ENCODE measurements at regions of chr20 and their contacts with region 1.

Region 1: DNA sequence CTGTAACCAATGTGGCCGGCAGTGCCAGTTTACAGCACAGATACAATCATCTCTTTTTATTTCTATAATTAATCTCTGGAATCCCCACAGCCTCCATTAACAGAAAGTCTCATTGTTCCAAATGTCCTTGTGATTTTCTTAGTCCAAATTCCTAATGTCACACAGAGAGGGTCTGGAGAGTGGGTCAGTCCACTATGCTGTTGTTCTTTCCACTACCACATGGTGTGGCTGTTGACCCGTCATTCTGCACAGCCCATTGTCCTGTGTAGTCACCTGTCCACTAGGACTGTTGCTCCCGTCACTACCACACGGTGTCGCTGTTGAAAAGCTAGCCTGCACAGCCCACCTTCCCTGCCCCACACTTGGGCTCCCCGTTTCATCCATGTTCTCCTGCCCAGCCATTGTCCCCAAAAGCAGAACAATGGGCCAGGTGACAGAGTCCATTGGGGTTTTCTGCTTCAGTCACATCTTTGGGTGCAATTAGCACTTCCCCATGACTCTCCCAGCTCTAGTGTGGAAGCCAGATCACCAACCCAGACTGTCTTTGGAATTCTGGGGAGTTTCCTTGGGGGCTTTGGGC is 8.6 kb upstream of the LBP start:
- DNase-seq: peak; percentile 72
- ATAC-seq: peak; percentile 88
- H3K4me3 ChIP-seq: no peak overlapping the region
- H3K27ac ChIP-seq: no peak overlapping the region
- H3K4me1 ChIP-seq: peaks cover 13% of the 10 kb centered on the region
- H3K27me3 ChIP-seq: peaks cover 0 to 13% of the 10 kb centered on the region in 2 experiments; a peak in 1 of 5 replicates
- CTCF ChIP-seq: peak; percentile 92
- EP300 ChIP-seq: no peak
- POLR2A ChIP-seq: no peak
- RAD21 ChIP-seq: peak; percentile 89

Region 2: GRCh38 chr20:38355151-38356012 is 17.7 kb after region 1 on chr20:
- CTCF ChIA-PET with region 1: interaction called, 9 read pairs
- POLR2A ChIA-PET with region 1: no interaction called
- in situ Hi-C with region 1: no loop called
- intact Hi-C with region 1: loop called (anchors 1 kb)
- DNase-seq: no peak
- ATAC-seq: peak; percentile 72
- H3K4me3 ChIP-seq: peak overlapping the region in 1 of 3 experiments; percentile 13; a peak in 1 of 6 replicates
- H3K27ac ChIP-seq: no peak overlapping the region
- H3K4me1 ChIP-seq: peaks cover 13% of the 10 kb centered on the region
- H3K27me3 ChIP-seq: no peaks in the 10 kb centered on the region
- CTCF ChIP-seq: no peak
- EP300 ChIP-seq: no peak
- POLR2A ChIP-seq: no peak
- RAD21 ChIP-seq: no peak

Region 3: DNA sequence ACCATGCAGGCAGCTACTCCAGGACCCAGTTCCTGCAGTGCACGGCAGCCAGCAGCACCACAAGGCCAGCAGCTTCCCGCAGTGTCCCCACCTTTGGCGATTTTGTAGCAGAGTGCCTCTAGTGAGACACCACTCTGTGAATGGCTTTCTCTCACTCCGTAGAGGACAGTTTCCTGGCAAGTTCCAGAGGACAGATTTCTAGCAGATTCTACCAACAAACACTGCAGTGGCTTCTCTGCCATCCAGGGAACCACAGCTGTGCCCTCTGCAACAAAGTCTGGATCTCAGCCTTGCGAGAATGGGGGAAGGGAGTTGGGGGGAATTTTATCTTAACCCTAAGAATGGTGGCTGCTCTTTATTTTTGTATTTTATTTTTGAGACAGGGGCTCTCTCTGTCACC is 68.8 kb after region 1 on chr20:
- CTCF ChIA-PET with region 1: interaction called, 38 read pairs
- POLR2A ChIA-PET with region 1: no interaction called
- in situ Hi-C with region 1: loop called (anchors 5 kb)
- intact Hi-C with region 1: loop called (anchors 1 kb)
- DNase-seq: no peak
- ATAC-seq: peak; percentile 10; the same call in 1 of the 3 replicates
- H3K4me3 ChIP-seq: no peak overlapping the region
- H3K27ac ChIP-seq: no peak overlapping the region
- H3K4me1 ChIP-seq: peaks cover 14% of the 10 kb centered on the region
- H3K27me3 ChIP-seq: no peaks in the 10 kb centered on the region
- CTCF ChIP-seq: no peak
- EP300 ChIP-seq: no peak
- POLR2A ChIP-seq: no peak
- RAD21 ChIP-seq: no peak

Region 4: DNA sequence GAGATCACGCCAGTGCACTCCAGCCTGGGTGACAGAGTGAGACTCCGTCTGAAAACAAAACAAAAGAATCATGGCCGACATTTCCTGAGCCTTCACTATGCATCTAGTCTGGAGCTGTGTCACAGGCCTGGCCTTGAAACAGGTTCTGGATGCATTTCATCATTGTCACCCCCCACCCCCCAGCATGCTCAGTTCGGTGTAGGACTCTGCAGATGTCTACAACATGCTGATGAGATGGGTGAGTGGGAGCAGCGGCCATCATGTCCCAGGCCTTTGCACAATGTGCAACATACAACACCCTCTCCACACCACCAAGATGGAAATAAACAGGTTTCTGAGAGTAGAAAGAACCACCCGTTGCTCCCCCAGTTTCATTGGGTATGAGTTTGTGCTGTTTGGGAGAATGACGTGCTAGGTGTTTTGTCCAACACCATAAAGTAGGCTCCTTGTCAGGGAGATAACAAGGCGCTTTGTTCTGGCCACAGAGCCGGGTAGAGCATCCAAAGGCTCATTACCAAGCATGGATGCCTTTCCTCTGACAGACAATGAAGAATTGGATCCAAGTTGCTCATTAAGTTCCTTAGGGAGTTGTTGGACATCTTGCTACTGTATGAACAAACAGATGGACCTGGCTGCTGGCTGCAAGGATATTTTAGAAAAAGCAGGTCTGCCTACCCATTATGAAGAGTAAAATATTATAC is 75.4 kb after region 1 on chr20:
- CTCF ChIA-PET with region 1: interaction called, 38 read pairs
- POLR2A ChIA-PET with region 1: no interaction called
- in situ Hi-C with region 1: loop called (anchors 5 kb)
- intact Hi-C with region 1: loop called (anchors 1 kb)
- DNase-seq: no peak
- ATAC-seq: no peak
- H3K4me3 ChIP-seq: no peak overlapping the region
- H3K27ac ChIP-seq: no peak overlapping the region
- H3K4me1 ChIP-seq: peaks cover 8% of the 10 kb centered on the region
- H3K27me3 ChIP-seq: no peaks in the 10 kb centered on the region
- CTCF ChIP-seq: no peak
- EP300 ChIP-seq: no peak
- POLR2A ChIP-seq: no peak
- RAD21 ChIP-seq: no peak

Measured in HepG2 (cell line).